Left cardiac atrium (tissue), 4 donors: ENCODE measurements at regions of chr1 and their contacts with region 1.

Region 1: GRCh38 chr1:85259118-85259911 is at the start of gene C1orf52:
- DNase-seq: peak; percentile 97
- ATAC-seq: peak; percentile 98 to 99
- total RNA-seq, gene C1orf52: 15.6 to 17.6 TPM

Region 2: DNA sequence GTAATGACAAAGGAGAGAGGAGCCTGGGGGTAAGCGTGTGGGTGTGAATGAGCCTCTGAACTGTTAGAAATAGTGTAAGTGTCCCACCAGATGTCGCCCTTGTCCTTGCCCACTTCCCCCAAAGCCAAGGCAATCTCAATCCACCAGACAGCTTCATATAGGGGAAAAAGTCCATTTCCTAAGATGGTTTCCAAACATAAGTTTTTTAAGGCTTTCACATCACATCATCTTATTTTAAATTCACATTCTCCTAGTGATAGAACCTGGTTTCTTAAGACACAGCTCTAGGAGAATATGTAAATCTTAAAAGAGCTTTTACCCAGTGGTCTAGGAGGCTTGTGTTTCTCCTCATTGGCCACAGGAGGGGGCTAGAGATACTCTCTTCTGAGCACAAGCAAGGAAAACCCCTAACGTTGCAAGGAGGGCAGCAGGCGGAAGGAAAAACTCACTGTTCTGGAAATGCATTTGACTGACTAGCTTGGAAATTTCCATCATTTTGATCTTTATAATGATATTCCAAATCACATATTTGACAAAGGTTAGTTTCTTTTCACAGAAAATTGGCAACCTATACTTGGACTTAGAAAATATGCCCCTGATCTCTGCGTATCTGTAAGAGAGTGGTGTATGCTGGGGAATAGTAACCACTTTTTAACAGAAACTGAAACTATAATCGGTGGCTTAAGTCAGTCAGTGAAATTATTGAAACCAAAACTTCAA is 314.4 kb before region 1 on chr1:
- intact Hi-C with region 1: loop called (anchors 2 to 10 kb)
- DNase-seq: peak; percentile 60
- ATAC-seq: peak; percentile 96 to 97

Region 3: GRCh38 chr1:85061711-85062424 is 197.4 kb before region 1 on chr1:
- intact Hi-C with region 1: loop called in 1 of 2 experiments (anchors 5 kb)
- DNase-seq: peak; percentile 92
- ATAC-seq: peak; percentile 100

Region 4: GRCh38 chr1:85109475-85109874 is 149.8 kb before region 1 on chr1:
- intact Hi-C with region 1: loop called (anchors 2 to 5 kb)
- DNase-seq: peak; percentile 47
- ATAC-seq: peak; percentile 93 to 95